Right cardiac atrium (tissue), 5 donors: ENCODE measurements at regions of chr11 and their contacts with region 1.

Region 1: GRCh38 chr11:103067118-103067517 is 24.8 kb downstream of the DCUN1D5 start:
- DNase-seq: no peak
- ATAC-seq: no peak
- H3K4me3 ChIP-seq: no peak overlapping the region
- H3K27ac ChIP-seq: no peak overlapping the region
- H3K4me1 ChIP-seq: no peaks in the 10 kb centered on the region
- H3K27me3 ChIP-seq: no peaks in the 10 kb centered on the region

Region 2: DNA sequence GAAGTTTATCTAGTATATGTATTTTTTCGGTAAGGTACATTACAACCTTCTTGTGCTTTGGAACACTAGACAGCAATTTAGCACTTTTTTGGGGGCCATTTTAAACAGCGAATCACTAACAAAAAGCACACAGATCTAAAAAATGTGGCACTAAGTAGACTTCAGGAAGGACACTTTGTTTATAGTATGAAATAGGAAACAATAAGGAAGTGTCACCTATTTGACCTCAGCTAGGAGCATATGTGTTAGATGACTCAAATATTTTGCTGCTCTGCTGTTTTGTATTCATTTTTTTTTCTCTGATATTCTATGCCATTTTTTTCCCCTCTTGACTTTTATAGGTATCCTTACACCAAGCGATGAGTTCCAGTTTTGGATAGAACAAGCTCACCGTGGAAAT is 47.7 kb after region 1 on chr11:
- intact Hi-C with region 1: loop called in 1 of 4 experiments (anchors 5 kb)
- DNase-seq: no peak
- ATAC-seq: no peak
- H3K4me3 ChIP-seq: no peak overlapping the region
- H3K27ac ChIP-seq: no peak overlapping the region
- H3K4me1 ChIP-seq: no peaks in the 10 kb centered on the region
- H3K27me3 ChIP-seq: no peaks in the 10 kb centered on the region